GM12878 (cell line): ENCODE measurements at regions of chr10 and their contacts with region 1.

Region 1: DNA sequence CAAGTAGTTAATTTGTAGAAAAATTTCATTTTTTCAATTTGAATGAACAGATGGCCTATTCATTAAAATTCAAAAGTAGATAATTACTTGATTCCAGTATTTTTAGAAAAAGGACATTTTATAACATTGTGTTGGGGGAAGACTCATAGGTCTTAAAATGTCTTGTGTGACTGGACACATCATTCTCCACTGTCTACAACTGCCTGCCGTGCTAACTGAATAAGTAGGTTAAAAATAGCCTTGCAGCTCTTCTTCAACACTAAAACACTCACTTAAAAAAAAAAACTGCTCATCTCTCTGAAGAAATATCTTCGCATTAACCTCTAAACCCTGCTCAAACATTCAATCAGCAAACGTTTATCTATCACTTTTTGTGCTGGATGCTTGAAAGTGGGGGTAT is 253.8 kb downstream of the CSTF2T start:
- DNase-seq: no peak
- ATAC-seq: no peak
- H3K4me3 ChIP-seq: no peak overlapping the region
- H3K27ac ChIP-seq: no peak overlapping the region
- H3K4me1 ChIP-seq: no peaks in the 10 kb centered on the region
- H3K27me3 ChIP-seq: no peaks in the 10 kb centered on the region
- CTCF ChIP-seq: no peak
- EP300 ChIP-seq: no peak
- POLR2A ChIP-seq: no peak
- RAD21 ChIP-seq: no peak

Region 2: DNA sequence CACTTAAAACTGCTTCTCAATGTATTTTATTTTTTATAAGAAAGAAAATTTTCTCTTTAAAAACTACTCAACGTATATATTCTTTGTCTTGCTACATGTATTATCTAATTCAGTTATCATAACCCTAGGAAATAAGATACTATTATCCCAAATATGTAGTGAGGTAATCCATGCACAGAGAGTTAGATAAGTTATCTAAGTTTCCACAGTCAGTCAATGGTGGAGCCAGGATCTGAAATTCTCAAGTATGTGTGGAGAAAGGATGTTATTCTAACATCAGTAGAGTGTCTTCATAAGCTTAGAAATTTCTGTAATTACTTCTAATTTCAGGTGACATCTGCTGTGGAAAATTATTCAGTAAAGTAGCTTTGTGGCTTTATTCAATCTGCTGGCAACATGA is 13.9 kb after region 1 on chr10:
- CTCF ChIA-PET with region 1: interaction called, 4 read pairs
- POLR2A ChIA-PET with region 1: no interaction called
- RAD21 ChIA-PET with region 1: no interaction called
- SMC1A ChIA-PET with region 1: no interaction called
- in situ Hi-C with region 1: no loop called
- intact Hi-C with region 1: loop called (anchors 1 kb)
- DNase-seq: no peak
- ATAC-seq: no peak
- H3K4me3 ChIP-seq: no peak overlapping the region
- H3K27ac ChIP-seq: no peak overlapping the region
- H3K4me1 ChIP-seq: no peaks in the 10 kb centered on the region
- H3K27me3 ChIP-seq: no peaks in the 10 kb centered on the region
- CTCF ChIP-seq: no peak
- EP300 ChIP-seq: no peak
- POLR2A ChIP-seq: no peak
- RAD21 ChIP-seq: no peak

Region 3: GRCh38 chr10:51783941-51784340 is 338.4 kb after region 1 on chr10:
- CTCF ChIA-PET with region 1: no interaction called
- POLR2A ChIA-PET with region 1: no interaction called
- RAD21 ChIA-PET with region 1: no interaction called
- SMC1A ChIA-PET with region 1: no interaction called
- in situ Hi-C with region 1: no loop called
- intact Hi-C with region 1: no loop called
- DNase-seq: no peak
- ATAC-seq: no peak
- H3K4me3 ChIP-seq: no peak overlapping the region
- H3K27ac ChIP-seq: no peak overlapping the region
- H3K4me1 ChIP-seq: no peaks in the 10 kb centered on the region
- H3K27me3 ChIP-seq: no peaks in the 10 kb centered on the region
- CTCF ChIP-seq: no peak
- EP300 ChIP-seq: no peak
- POLR2A ChIP-seq: no peak
- RAD21 ChIP-seq: no peak